ENCODE measurements at regions of chr16 and their contacts with region 1.

Region 1: GRCh38 chr16:81623363-81624102 is 155.6 kb upstream of the PLCG2 start:
- DNase-seq: peak; percentile 83
- H3K4me3 Mint-ChIP-seq: no peak overlapping the region
- H3K27ac Mint-ChIP-seq: peak overlapping the region; percentile 22
- H3K4me1 Mint-ChIP-seq: peaks cover 5% of the 10 kb centered on the region
- H3K27me3 Mint-ChIP-seq: no peaks in the 10 kb centered on the region

Region 2: DNA sequence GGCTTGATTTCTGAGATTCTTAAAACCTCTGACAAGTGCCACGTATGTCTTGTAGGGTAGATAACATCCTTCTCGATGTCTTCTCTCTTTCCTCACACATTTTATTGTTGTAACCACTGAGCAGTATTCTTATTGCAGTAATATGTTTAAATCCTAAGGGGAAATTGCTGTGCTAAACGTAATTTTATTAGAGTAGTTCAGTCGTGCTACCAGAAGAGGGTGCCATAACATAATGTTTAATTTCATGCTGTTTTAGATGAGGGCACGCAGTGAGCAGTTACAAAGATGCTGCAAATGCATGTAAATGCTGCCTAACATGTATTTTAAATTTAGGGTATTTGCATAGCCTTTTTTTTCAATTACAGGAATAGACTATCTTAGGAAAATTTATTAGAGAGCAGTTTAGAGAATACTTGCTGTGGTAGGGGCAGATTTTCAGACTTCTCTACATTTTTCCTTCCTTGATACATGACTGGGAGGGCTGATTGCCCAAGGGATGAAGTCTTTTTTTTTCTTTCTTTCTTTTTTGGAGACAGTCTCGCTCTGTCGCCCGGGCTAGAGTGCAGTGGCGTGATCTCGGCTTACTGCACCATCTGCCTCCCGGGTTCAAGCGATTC is 257.1 kb before region 1 on chr16:
- CTCF ChIA-PET with region 1: interaction called, 5 read pairs
- intact Hi-C with region 1: loop called (anchors 1 kb)
- DNase-seq: peak; percentile 9
- H3K4me3 Mint-ChIP-seq: no peak overlapping the region
- H3K27ac Mint-ChIP-seq: no peak overlapping the region
- H3K4me1 Mint-ChIP-seq: no peaks in the 10 kb centered on the region
- H3K27me3 Mint-ChIP-seq: no peaks in the 10 kb centered on the region

Region 3: GRCh38 chr16:81688182-81688581 is 64.6 kb after region 1 on chr16:
- CTCF ChIA-PET with region 1: interaction called, 3 read pairs
- intact Hi-C with region 1: loop called (anchors 1 kb)
- DNase-seq: peak; percentile 73
- H3K4me3 Mint-ChIP-seq: no peak overlapping the region
- H3K27ac Mint-ChIP-seq: peak overlapping the region; percentile 18
- H3K4me1 Mint-ChIP-seq: peaks cover 15% of the 10 kb centered on the region
- H3K27me3 Mint-ChIP-seq: no peaks in the 10 kb centered on the region

Region 4: DNA sequence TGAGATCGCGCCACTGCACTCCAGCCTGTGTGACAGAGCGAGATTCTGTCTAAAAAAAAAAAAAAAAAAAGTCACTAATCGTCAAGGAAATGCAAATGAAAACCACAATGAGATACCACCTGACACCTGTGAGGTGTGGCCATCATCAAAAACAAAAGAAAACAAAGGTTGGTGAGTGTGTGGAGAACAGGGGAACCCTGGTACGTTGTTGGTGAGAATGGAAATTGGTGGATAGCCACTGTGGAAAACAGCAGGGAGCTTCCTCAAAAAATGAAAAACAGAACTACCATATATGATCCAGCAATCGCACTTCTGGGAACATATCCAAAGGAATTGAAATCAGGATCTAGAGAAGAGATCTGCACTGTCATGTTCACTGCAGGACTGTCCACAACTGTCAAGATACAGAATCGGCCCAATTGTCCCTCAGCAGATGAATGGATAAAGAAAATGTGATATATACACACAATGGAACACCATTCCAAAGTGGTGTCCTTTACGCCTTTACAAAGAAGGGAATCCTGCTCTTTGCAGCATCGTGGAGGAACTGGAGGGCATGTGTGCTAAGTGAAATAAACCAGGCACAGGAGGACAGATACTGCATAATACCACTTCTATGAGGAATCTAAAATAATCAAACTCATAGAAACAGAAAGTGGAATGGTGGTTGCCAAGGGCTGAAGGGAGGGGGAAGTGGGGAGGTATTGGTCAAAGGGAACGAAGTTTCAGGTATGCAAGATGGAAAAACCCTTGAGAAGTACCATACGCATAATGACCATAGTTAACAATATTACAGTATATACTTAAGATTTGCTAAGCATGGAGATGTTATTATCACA is 92.0 kb after region 1 on chr16:
- CTCF ChIA-PET with region 1: interaction called, 13 read pairs
- intact Hi-C with region 1: loop called (anchors 1 kb)
- DNase-seq: peak; percentile 54
- H3K4me3 Mint-ChIP-seq: no peak overlapping the region
- H3K27ac Mint-ChIP-seq: peak overlapping the region; percentile 25
- H3K4me1 Mint-ChIP-seq: peaks cover 37% of the 10 kb centered on the region
- H3K27me3 Mint-ChIP-seq: no peaks in the 10 kb centered on the region

Region 5: DNA sequence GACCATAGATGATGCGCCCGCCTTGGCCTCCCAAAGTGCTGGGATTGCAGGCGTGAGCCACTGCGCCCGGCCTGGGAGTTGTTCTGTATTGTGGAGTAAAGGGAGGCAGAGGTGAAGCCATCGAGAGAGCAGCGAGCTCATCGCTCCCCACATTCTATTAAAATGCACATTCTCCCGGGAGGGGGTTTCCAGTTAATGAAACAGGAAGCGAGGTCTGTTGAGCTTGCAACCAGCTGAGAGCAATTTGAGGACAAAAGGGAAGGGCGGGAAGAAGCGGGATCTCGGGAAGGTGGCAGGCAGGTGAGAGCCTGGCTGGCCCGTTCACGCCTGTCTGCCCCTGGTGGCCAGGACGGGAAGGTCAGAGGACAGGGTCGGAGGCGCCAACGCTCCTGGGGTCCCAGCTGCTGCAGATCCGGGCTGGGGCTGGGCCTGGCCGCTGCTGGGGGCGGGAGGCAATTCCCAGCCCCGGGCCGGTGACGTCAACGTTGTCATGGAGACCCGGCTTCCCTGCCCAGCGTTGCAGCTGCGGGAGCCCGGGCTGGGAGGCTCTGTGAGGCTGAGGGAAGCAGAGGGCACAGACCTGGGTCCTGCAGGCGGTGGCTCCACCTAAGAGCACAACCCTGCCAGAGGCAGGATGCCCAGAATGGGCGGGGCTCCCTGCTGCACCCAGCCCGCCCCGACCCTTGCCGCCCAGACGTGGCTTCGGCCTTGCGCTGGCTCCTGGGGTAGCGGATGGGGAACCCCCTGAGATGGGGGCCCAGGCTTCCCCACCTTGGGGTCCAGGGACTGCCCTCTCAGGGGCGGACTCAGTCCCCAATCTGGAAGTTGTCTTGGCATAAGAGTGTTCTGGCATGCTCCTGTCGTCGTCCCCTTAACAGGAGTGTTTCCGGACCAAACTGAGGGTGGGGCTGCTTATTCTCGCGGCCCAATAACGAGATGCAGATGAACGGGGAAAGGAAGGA is 106.8 kb after region 1 on chr16:
- CTCF ChIA-PET with region 1: interaction called, 67 read pairs
- intact Hi-C with region 1: no loop called
- DNase-seq: peak; percentile 67
- H3K4me3 Mint-ChIP-seq: peak overlapping the region; percentile 75
- H3K27ac Mint-ChIP-seq: peak overlapping the region; percentile 74
- H3K4me1 Mint-ChIP-seq: peaks cover 16% of the 10 kb centered on the region
- H3K27me3 Mint-ChIP-seq: no peaks in the 10 kb centered on the region

Region 6: DNA sequence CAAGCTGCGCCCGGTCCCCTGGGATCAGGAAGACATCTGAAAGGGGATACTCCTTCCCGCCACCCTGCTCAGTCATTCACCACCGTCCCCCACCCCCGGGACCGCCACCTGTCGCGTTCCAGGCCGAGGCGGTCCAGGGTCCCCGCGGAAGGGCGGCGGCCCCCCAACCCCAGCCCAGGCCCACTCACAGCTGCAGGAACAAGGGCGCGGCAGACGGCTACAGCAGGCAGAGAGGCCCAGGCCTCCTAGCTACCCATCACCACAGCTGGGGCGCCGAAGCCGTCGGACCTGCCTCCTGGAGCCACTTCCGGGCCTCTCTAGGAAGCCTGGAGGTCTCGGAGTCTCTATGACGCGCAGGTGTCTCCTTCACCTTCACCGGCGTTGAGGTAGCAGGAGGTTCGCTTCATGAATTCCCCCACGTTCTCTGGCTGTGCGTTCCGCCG is 387.7 kb after region 1 on chr16 and contains the start of gene SDR42E1:
- CTCF ChIA-PET with region 1: no interaction called
- intact Hi-C with region 1: no loop called
- DNase-seq: peak; percentile 75
- H3K4me3 Mint-ChIP-seq: peak within 1 kb of the TSS; percentile 79
- H3K27ac Mint-ChIP-seq: peak within 1 kb of the TSS; percentile 55
- H3K4me1 Mint-ChIP-seq: peaks cover 21% of the 10 kb centered on the region
- H3K27me3 Mint-ChIP-seq: peaks cover 7% of the 10 kb centered on the region
- total RNA-seq, gene SDR42E1: 4.2 to 6.5 TPM

Measured in activated naive CD4-positive, alpha-beta T cell treated with anti-CD3 and anti-CD28 coated beads for 36 hours (primary cell).